CD4-positive, alpha-beta T cell (primary cell): ENCODE measurements at regions of chr2 and their contacts with region 1.

Region 1: GRCh38 chr2:74472086-74472944 is at the start of gene MRPL53:
- DNase-seq: peak; percentile 96 to 99 (median 97)
- ATAC-seq: peak; percentile 92
- H3K4me3 ChIP-seq: peak within 1 kb of the TSS; percentile 80
- H3K4me3 Mint-ChIP-seq: peak within 1 kb of the TSS; percentile 95
- H3K27ac ChIP-seq: peak within 1 kb of the TSS; percentile 85 to 91
- H3K27ac Mint-ChIP-seq: peak within 1 kb of the TSS; percentile 96
- H3K4me1 ChIP-seq: peaks cover 30% of the 10 kb centered on the region
- H3K4me1 Mint-ChIP-seq: peaks cover 25% of the 10 kb centered on the region
- H3K27me3 ChIP-seq: no peaks in the 10 kb centered on the region
- H3K27me3 Mint-ChIP-seq: no peaks in the 10 kb centered on the region
- CTCF ChIP-seq: no peak
- total RNA-seq, gene MRPL53: 39.5 to 44.3 TPM

Region 2: DNA sequence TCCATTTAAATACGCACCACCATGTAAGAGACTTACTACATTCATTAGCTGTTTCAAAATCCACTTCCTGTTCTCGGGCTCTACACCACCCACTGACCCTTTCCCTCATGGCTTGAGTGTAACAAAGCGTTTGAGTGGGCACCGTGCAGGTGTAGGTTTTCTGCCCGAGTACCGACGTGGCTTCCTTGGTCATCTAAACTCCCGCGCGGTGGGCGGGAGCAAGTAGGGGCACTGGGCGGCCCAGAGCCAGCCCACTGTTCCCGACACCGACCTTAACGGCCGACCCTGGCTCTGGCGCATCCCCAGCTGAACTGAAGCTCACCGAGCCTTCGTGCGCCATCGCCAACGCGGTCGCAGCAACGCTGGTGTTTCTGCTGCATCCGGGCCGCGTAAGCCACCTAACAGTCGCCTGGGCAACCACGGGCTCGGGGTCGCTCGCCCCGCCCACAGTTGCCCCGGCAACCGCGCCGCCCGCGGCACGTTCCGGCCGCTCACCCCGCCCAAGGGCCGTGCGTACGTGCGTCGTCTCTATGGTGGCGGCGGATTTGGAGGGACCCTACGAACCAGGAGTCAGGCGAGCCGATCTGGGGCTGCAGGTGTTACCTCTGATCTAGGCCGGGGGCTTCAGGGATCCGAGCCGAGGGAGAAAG is 51.0 kb before region 1 on chr2 and contains the starts of genes C2orf81 and WDR54:
- CTCF ChIA-PET with region 1: no interaction called
- POLR2A ChIA-PET with region 1: interaction called, 10 read pairs
- intact Hi-C with region 1: loop called in 1 of 2 experiments (anchors 5 kb)
- DNase-seq: peak; percentile 85 to 97 (median 94)
- ATAC-seq: peak; percentile 82
- H3K4me3 ChIP-seq: peak within 1 kb of the TSS; percentile 98
- H3K4me3 Mint-ChIP-seq: peak within 1 kb of the TSS; percentile 100
- H3K27ac ChIP-seq: peak within 1 kb of the TSS; percentile 82 to 98
- H3K27ac Mint-ChIP-seq: peak within 1 kb of the TSS; percentile 96
- H3K4me1 ChIP-seq: peaks cover 20% of the 10 kb centered on the region
- H3K4me1 Mint-ChIP-seq: peaks cover 39% of the 10 kb centered on the region
- H3K27me3 ChIP-seq: no peaks in the 10 kb centered on the region
- H3K27me3 Mint-ChIP-seq: no peaks in the 10 kb centered on the region
- CTCF ChIP-seq: no peak
- total RNA-seq, gene C2orf81: 2.9 to 3.4 TPM
- total RNA-seq, gene WDR54: 21.7 to 25.1 TPM

Region 3: DNA sequence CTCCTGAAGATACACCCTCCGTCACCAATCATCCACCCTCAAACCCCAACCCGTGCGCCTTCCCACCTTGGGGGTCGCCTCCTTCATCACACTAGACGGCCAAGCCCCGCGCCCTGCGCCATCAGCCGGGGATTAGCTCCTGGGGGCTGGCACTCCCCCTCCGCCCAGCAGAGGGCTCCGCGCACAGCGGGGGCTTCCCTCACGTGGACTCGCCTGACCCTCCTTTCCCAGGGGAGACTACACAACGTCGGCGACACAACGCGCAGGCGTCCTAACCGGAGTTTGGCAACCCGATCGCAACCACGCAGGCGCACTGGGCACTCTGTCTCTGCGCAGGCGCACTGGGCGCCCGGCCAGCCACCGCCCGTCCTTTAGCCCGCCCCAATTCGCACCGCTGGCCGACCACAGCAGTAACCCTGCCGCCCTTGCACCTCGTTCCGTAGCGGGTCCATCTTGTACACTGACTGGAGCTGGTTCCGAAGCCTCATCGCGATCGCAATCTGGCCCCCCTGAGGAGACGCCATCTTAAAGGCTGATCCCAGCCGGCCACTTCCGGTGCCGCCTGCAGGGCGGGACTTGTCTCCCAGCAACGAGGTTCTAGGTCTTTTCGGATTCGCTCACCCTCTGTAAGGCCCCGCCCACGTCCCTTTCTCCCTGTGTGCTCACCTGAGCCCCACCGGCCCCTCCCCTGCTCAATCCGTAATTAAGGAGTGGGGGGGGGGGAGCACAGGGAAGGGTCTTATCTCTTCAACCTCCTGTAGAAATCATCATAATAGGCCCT is 35.0 kb after region 1 on chr2 and contains the start of gene PCGF1:
- CTCF ChIA-PET with region 1: interaction called, 3 read pairs
- POLR2A ChIA-PET with region 1: interaction called, 11 read pairs
- intact Hi-C with region 1: no loop called
- DNase-seq: peak; percentile 97 to 100 (median 98)
- ATAC-seq: peak; percentile 95
- H3K4me3 ChIP-seq: peak within 1 kb of the TSS; percentile 92
- H3K4me3 Mint-ChIP-seq: peak within 1 kb of the TSS; percentile 100
- H3K27ac ChIP-seq: peak within 1 kb of the TSS; percentile 98
- H3K27ac Mint-ChIP-seq: peak within 1 kb of the TSS; percentile 97
- H3K4me1 ChIP-seq: peaks cover 49% of the 10 kb centered on the region
- H3K4me1 Mint-ChIP-seq: peaks cover 62% of the 10 kb centered on the region
- H3K27me3 ChIP-seq: peaks cover 25 to 41% of the 10 kb centered on the region in 2 experiments
- H3K27me3 Mint-ChIP-seq: peaks cover 75% of the 10 kb centered on the region
- CTCF ChIP-seq: no peak
- total RNA-seq, gene PCGF1: 11.6 to 13.8 TPM